ENCODE measurements at regions of chr3 and their contacts with region 1.

Region 1: GRCh38 chr3:141360888-141361598 is 7.3 kb upstream of the ZBTB38 start:
- DNase-seq: peak; percentile 87 to 88
- H3K4me3 ChIP-seq: no peak overlapping the region
- H3K4me3 Mint-ChIP-seq: no peak overlapping the region
- H3K27ac Mint-ChIP-seq: peak overlapping the region; percentile 87
- H3K4me1 ChIP-seq: peaks cover 25% of the 10 kb centered on the region
- H3K4me1 Mint-ChIP-seq: peaks cover 26% of the 10 kb centered on the region
- H3K27me3 ChIP-seq: no peaks in the 10 kb centered on the region
- H3K27me3 Mint-ChIP-seq: no peaks in the 10 kb centered on the region
- CTCF ChIP-seq: peak; percentile 56 to 76

Region 2: DNA sequence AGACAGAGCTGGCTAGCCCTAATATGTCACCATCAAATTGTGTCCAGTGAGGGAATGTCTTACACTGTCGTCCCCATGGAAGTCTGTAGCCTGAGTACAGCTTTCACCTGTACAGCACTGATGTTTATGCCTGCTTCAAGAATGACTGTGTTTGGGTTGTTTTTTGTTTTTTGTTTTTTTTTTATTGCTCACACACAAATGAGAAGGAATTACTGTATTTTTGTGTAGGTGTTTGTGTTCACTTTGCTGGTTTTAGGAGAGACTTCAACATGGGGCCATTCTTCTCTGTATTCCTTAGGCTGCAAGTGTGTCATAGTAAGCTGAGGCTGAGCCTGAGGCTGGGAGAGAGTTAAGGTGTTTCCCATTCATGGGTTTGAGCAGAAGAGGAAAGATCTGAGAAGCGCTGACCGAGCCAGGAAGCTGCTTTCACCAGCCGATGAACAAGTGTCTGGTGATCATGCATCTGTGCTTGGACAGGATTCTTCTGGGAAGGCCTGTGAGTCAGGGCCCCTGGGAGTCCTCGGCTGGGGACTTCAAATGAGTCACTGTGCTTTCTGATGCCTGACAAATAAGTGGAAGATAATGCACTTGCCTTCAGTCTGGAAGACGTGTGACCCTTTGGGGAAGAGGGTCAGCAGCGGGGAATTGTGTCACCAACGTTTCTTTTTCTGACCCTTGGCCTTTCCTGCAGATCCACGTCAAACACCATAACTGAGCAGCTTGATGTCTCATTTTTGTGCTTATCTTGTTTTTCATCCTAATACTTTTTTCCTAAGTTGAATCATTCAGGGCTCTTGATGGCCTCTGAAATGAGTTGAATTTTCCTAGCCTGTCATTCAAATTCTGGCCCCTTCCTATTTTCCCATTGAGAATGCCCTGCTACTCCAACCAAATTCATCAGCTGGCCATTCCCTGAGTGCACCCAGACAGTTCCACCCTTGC is 29.4 kb before region 1 on chr3:
- CTCF ChIA-PET with region 1: no interaction called
- POLR2A ChIA-PET with region 1: no interaction called
- intact Hi-C with region 1: loop called (anchors 2 kb)
- DNase-seq: peak; percentile 53 to 67
- H3K4me3 ChIP-seq: no peak overlapping the region
- H3K4me3 Mint-ChIP-seq: peak overlapping the region; percentile 49
- H3K27ac Mint-ChIP-seq: peak overlapping the region; percentile 73
- H3K4me1 ChIP-seq: peaks cover 37% of the 10 kb centered on the region
- H3K4me1 Mint-ChIP-seq: peaks cover 41% of the 10 kb centered on the region
- H3K27me3 ChIP-seq: no peaks in the 10 kb centered on the region
- H3K27me3 Mint-ChIP-seq: no peaks in the 10 kb centered on the region
- CTCF ChIP-seq: no peak

Region 3: GRCh38 chr3:141402476-141403171 is 41.6 kb after region 1 on chr3:
- CTCF ChIA-PET with region 1: interaction called, 4 read pairs
- POLR2A ChIA-PET with region 1: no interaction called
- intact Hi-C with region 1: loop called (anchors 2 kb)
- DNase-seq: peak; percentile 59 to 70
- H3K4me3 ChIP-seq: peak overlapping the region; percentile 70
- H3K4me3 Mint-ChIP-seq: peak overlapping the region; percentile 67
- H3K27ac Mint-ChIP-seq: no peak overlapping the region
- H3K4me1 ChIP-seq: peaks cover 29% of the 10 kb centered on the region
- H3K4me1 Mint-ChIP-seq: peaks cover 17% of the 10 kb centered on the region
- H3K27me3 ChIP-seq: no peaks in the 10 kb centered on the region
- H3K27me3 Mint-ChIP-seq: no peaks in the 10 kb centered on the region
- CTCF ChIP-seq: no peak

Region 4: DNA sequence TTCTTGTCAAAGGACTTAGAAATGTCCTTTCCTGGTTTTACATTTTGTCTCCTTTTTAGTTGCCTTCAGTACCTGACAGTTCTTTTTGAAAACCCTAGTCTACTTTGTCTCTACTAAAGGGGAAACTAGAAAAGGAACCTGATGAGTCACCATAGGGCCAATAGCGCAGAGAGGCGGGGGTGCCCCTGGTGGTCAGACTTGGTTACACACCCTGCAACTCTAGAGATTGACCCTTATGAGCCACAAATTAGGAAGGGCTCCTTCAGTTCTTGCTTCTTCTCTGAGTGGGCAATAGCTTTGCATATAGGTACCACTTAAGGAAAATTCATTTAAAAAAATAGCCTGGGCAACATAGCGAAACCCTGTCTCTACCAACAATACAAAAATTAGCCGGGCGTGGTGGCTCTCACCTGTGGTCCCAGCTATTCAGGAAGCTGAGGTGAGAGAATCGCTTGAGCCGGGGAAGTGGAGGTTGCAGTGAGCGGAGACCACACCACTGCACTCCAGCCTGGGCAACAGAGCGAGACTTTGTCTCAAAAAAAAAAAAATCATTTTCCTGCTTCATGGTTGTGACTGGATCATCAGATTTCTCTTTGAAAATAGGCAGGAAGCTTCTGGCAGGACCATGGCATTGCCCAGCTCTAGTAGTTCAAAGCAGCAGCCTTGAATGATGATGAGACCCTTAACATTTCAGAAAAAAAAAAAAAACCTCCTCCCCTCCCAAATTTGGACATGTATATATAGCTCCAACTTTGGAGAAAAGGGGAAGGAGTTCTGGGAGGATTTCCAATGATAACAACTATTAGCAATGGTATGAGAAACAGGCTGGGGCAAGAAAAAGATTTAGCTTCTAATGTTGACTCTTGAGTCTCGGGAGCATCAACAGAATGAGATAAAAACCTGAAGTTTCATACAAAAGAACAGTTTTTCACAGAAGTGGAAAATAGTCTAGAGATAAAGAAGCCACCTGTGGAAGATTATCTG is 80.6 kb after region 1 on chr3:
- CTCF ChIA-PET with region 1: interaction called, 10 read pairs
- POLR2A ChIA-PET with region 1: no interaction called
- intact Hi-C with region 1: loop called (anchors 1 kb)
- DNase-seq: peak; percentile 56 to 80
- H3K4me3 ChIP-seq: no peak overlapping the region
- H3K4me3 Mint-ChIP-seq: no peak overlapping the region
- H3K27ac Mint-ChIP-seq: peak overlapping the region; percentile 45
- H3K4me1 ChIP-seq: peaks cover 15% of the 10 kb centered on the region
- H3K4me1 Mint-ChIP-seq: peaks cover 28% of the 10 kb centered on the region
- H3K27me3 ChIP-seq: no peaks in the 10 kb centered on the region
- H3K27me3 Mint-ChIP-seq: no peaks in the 10 kb centered on the region
- CTCF ChIP-seq: peak; percentile 83 to 89

Region 5: GRCh38 chr3:141452036-141452435 is 91.0 kb after region 1 on chr3:
- CTCF ChIA-PET with region 1: interaction called, 23 read pairs
- POLR2A ChIA-PET with region 1: no interaction called
- intact Hi-C with region 1: loop called (anchors 1 kb)
- DNase-seq: peak; percentile 51 to 61
- H3K4me3 ChIP-seq: no peak overlapping the region
- H3K4me3 Mint-ChIP-seq: no peak overlapping the region
- H3K27ac Mint-ChIP-seq: no peak overlapping the region
- H3K4me1 ChIP-seq: peaks cover 44% of the 10 kb centered on the region
- H3K4me1 Mint-ChIP-seq: peaks cover 25% of the 10 kb centered on the region
- H3K27me3 ChIP-seq: no peaks in the 10 kb centered on the region
- H3K27me3 Mint-ChIP-seq: no peaks in the 10 kb centered on the region
- CTCF ChIP-seq: peak; percentile 46 to 64

Measured in Caco-2 (cell line).